ENCODE measurements at regions of chr12 and their contacts with region 1.

Region 1: GRCh38 chr12:106386813-106387535 is 29.4 kb downstream of the POLR3B start:
- H3K4me3 Mint-ChIP-seq: no peak overlapping the region
- H3K27ac Mint-ChIP-seq: no peak overlapping the region
- H3K4me1 Mint-ChIP-seq: no peaks in the 10 kb centered on the region
- H3K27me3 Mint-ChIP-seq: peaks cover 12% of the 10 kb centered on the region

Region 2: DNA sequence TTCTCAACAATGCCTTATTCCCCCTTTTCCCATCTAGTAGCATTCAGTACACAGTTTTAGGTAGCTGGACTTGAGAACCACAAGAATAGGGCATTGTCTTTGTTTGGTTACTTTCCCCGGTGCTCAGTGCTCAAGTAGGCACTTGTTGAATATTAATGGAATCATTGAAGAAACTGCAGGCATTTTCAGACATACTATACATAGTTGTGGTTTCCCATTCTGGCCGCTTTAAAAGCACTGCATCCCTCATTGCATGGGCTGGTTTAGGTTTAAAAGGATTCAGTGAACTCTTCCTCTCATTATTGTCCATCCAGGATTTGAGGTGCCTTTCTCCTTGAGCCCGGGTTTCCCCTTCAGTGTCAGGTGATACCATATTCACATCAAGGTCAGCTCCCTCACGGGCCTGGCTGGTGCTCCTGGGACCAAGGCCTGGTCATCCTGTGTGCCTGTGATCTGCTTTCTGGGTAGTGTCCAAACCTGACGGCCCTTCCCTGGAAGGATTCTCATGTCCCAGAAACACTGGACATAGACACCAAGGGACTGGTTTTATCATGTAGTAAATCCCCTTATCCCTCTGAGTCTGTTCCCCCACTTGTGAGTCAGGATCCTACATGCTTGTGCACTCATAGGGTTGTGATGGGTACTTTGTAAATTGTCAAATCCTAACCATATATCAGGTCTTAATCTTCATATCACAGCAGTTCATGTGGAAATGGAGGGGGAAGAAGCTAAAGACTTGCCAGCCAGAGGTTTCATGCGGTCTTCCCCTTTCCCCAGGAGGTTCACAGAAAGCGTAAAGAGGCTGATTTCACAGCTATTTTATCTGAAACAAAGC is 77.1 kb before region 1 on chr12:
- intact Hi-C with region 1: no loop called
- H3K4me3 Mint-ChIP-seq: no peak overlapping the region
- H3K27ac Mint-ChIP-seq: peak overlapping the region; percentile 17
- H3K4me1 Mint-ChIP-seq: peaks cover 57% of the 10 kb centered on the region
- H3K27me3 Mint-ChIP-seq: no peaks in the 10 kb centered on the region

Region 3: GRCh38 chr12:106564678-106565329 is 177.8 kb after region 1 on chr12:
- intact Hi-C with region 1: no loop called
- H3K4me3 Mint-ChIP-seq: no peak overlapping the region
- H3K27ac Mint-ChIP-seq: no peak overlapping the region
- H3K4me1 Mint-ChIP-seq: no peaks in the 10 kb centered on the region
- H3K27me3 Mint-ChIP-seq: peaks cover 14% of the 10 kb centered on the region

Region 4: GRCh38 chr12:106841510-106842302 is 454.7 kb after region 1 on chr12:
- intact Hi-C with region 1: loop called (anchors 2 kb)
- H3K4me3 Mint-ChIP-seq: no peak overlapping the region
- H3K27ac Mint-ChIP-seq: no peak overlapping the region
- H3K4me1 Mint-ChIP-seq: no peaks in the 10 kb centered on the region
- H3K27me3 Mint-ChIP-seq: no peaks in the 10 kb centered on the region

Region 5: DNA sequence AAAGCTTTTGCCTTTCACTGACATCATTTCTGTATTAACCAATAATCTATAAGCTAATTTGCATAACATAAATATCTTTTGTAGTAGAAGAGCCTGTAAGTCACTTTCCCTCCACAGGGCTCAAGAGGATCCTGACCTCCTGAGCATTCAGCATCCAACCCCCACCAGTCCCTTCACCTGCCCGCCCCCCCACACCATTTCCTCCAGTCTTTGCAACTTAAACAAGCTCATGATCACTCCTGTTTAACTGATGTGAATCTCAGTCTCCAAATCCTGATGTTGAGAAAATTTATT is 718.4 kb after region 1 on chr12:
- intact Hi-C with region 1: loop called (anchors 2 kb)
- H3K4me3 Mint-ChIP-seq: no peak overlapping the region
- H3K27ac Mint-ChIP-seq: no peak overlapping the region
- H3K4me1 Mint-ChIP-seq: no peaks in the 10 kb centered on the region
- H3K27me3 Mint-ChIP-seq: peaks cover 9% of the 10 kb centered on the region